Activated CD4-positive, alpha-beta memory T cell treated with anti-CD3 and anti-CD28 coated beads for 36 hours (primary cell): ENCODE measurements at regions of chr5 and their contacts with region 1.

Region 1: GRCh38 chr5:80985600-80986228 is 25.6 kb downstream of the RASGRF2 start:
- DNase-seq: no peak
- H3K4me3 Mint-ChIP-seq: no peak overlapping the region
- H3K27ac Mint-ChIP-seq: peak overlapping the region; percentile 20
- H3K4me1 Mint-ChIP-seq: peaks cover 58% of the 10 kb centered on the region
- H3K27me3 Mint-ChIP-seq: no peaks in the 10 kb centered on the region

Region 2: DNA sequence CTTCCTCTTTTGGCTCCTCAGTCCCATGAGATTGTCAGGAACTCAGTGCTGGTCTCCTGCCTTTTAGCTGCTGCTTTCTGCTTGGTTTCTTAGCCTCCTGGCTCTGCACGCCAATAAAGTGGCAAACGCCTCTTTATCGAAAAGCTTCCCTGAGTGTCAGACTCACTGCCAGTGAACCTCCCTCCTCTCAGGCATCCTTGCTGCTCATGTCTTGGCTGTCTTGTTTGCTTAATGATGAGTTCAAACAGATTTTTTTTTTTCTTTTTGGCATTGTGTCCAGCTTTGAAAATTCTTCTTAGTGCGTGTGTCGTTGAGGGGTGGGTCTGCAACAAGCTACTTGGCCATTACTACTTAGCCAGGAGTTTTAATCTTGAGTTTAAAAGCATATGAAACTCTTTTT is 10.6 kb before region 1 on chr5:
- CTCF ChIA-PET with region 1: interaction called, 12 read pairs
- POLR2A ChIA-PET with region 1: interaction called, 4 read pairs
- intact Hi-C with region 1: no loop called
- DNase-seq: no peak
- H3K4me3 Mint-ChIP-seq: no peak overlapping the region
- H3K27ac Mint-ChIP-seq: no peak overlapping the region
- H3K4me1 Mint-ChIP-seq: peaks cover 54% of the 10 kb centered on the region
- H3K27me3 Mint-ChIP-seq: no peaks in the 10 kb centered on the region

Region 3: DNA sequence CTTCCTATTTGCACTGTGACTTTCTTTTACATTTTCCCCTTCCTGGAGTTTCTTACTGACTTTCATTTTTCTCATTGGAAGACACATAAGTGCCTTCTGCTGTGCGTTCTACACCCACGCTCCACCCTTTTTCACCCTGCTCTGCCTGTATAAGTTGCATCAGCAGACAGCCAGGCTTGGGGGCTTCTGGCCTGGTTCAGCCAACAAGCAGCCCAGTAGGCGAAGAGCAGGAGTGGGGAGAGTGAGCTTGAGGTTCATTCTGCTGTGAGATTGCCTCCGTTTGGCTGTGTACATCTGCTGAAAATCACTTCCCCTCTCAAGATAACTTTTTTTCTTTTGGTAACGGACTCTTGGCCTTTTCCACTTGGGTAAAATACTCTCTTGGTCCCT is 12.9 kb after region 1 on chr5:
- CTCF ChIA-PET with region 1: interaction called, 3 read pairs
- POLR2A ChIA-PET with region 1: no interaction called
- intact Hi-C with region 1: loop called (anchors 1 kb)
- DNase-seq: peak; percentile 54
- H3K4me3 Mint-ChIP-seq: peak overlapping the region; percentile 63
- H3K27ac Mint-ChIP-seq: peak overlapping the region; percentile 87
- H3K4me1 Mint-ChIP-seq: peaks cover 55% of the 10 kb centered on the region
- H3K27me3 Mint-ChIP-seq: no peaks in the 10 kb centered on the region